ENCODE measurements at regions of chr1 and their contacts with region 1.

Region 1: DNA sequence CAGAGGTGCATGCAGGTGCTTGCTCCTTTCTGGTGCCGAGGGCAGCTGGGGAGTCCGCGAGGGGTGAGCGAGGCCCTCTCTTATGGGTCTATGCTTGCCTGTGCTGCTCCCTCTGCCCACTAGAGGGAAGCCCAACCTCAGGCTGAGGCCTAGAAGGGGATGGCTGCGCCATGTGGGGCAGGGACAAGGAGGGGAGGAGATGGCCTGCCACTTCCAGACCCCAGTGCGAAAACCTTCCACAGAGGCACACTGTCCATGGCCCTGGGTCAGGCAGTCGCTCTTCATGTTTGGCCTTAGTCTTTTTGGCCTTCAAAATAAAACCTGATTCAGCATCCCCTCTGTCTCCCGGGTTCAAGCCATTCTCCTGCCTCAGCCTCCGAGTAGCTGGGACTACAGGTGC is 14.0 kb downstream of the RHBG start:
- DNase-seq: no peak
- ATAC-seq: peak; percentile 98
- H3K4me3 ChIP-seq: no peak overlapping the region
- H3K27ac ChIP-seq: no peak overlapping the region
- H3K4me1 ChIP-seq: no peaks in the 10 kb centered on the region
- H3K27me3 ChIP-seq: peaks cover 2 to 5% of the 10 kb centered on the region in 2 experiments
- CTCF ChIP-seq: peak; percentile 92 to 98 (median 93)
- EP300 ChIP-seq: no peak
- POLR2A ChIP-seq: no peak
- RAD21 ChIP-seq: peak; percentile 91

Region 2: DNA sequence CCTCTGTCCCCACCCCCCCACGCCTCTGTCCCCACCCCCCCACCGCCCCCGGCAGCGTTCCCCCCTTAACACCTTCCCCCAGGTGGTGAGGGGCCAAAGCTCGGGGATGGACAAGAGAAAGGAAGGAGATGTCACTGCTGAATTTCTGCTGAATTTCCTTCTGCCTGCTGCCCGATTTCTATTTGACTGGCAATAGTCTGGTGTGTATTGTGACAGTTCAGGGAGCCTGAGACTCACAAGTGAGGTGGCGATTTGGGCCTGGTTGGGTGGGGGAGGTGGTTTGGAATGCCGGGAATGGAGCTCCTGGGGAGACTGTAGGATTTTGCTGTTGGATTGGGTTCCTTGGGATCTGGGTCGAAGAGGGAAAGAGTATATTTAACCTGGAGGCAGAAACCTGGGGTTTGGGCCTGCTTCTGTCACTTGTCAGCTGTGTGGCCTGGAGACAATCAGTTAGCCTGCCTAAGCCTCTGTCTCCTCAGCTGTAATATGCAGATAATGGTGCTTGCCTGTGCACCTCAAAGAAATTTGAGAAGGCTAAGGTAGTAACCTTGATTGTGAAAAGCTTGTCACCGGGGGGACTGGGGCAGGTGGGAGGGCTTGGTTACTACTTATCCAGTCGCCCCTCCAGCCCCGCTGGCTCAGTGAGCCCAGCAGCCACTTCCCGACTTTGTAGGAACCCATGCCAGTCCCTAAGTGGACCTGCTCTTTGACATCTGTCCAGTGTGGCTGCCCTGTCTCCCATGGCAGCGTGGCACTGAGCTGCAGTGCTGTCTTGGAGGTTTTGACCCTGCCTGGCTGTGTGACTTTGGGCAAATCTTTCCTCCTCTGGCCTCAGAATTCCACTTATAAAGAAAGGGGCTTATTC is 276.2 kb before region 1 on chr1:
- CTCF ChIA-PET with region 1: no interaction called
- POLR2A ChIA-PET with region 1: no interaction called
- RAD21 ChIA-PET with region 1: no interaction called
- SMC1A ChIA-PET with region 1: no interaction called
- in situ Hi-C with region 1: no loop called
- intact Hi-C with region 1: no loop called
- DNase-seq: no peak
- ATAC-seq: peak; percentile 38
- H3K4me3 ChIP-seq: peak overlapping the region; percentile 45; the same call in 1 of the 2 replicates
- H3K27ac ChIP-seq: peak overlapping the region; percentile 57
- H3K4me1 ChIP-seq: peaks cover 30% of the 10 kb centered on the region
- H3K27me3 ChIP-seq: no peaks in the 10 kb centered on the region
- CTCF ChIP-seq: no peak
- EP300 ChIP-seq: no peak
- POLR2A ChIP-seq: no peak
- RAD21 ChIP-seq: no peak

Region 3: DNA sequence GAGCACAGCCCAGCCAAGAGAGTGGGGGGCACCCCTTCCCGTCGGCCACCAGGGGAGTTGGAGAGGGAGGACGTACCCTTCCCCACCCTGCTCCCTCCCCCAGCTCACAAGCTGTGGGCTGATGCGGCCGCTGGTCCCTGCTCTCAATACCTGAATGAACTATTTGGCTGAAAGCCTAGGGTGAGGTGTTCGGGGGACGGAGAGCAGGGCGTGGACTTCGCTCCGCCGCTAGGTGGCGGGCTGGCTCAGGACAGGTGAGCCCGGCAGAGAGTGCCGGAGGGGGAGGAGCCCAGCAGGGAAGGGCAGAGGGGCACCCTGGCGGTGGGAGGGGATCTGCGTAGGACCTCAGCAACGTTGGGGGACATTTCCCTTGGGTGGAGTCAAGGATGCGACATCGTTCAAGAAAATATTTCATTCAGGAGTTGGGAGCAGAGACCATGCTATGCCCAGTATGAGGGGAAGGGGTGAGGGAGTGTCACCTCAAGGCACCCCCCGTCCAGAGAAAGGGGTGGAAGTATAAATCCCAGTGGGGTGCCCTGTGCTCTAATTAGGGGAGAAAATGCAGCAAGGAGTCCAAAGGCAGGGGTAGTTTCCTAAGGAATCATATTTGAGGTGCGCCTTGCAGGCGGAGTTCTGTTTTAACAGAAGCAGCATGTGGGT is 26.0 kb before region 1 on chr1:
- CTCF ChIA-PET with region 1: interaction called, 22 read pairs
- POLR2A ChIA-PET with region 1: no interaction called
- RAD21 ChIA-PET with region 1: interaction called, 4 read pairs
- SMC1A ChIA-PET with region 1: interaction called, 6 read pairs
- in situ Hi-C with region 1: no loop called
- intact Hi-C with region 1: no loop called
- DNase-seq: no peak
- ATAC-seq: peak; percentile 100
- H3K4me3 ChIP-seq: no peak overlapping the region
- H3K27ac ChIP-seq: no peak overlapping the region
- H3K4me1 ChIP-seq: 0 out of 2 replicates have a peak, but pooled peaks cover 2% of the 10 kb centered on the region
- H3K27me3 ChIP-seq: peaks cover 2% of the 10 kb centered on the region in 2 experiments; a peak in 2 of 4 replicates
- CTCF ChIP-seq: peak; percentile 89 to 98 (median 95); a peak in 5 of 6 replicates
- EP300 ChIP-seq: no peak
- POLR2A ChIP-seq: no peak
- RAD21 ChIP-seq: peak; percentile 53; the same call in 1 of the 2 replicates

Region 4: DNA sequence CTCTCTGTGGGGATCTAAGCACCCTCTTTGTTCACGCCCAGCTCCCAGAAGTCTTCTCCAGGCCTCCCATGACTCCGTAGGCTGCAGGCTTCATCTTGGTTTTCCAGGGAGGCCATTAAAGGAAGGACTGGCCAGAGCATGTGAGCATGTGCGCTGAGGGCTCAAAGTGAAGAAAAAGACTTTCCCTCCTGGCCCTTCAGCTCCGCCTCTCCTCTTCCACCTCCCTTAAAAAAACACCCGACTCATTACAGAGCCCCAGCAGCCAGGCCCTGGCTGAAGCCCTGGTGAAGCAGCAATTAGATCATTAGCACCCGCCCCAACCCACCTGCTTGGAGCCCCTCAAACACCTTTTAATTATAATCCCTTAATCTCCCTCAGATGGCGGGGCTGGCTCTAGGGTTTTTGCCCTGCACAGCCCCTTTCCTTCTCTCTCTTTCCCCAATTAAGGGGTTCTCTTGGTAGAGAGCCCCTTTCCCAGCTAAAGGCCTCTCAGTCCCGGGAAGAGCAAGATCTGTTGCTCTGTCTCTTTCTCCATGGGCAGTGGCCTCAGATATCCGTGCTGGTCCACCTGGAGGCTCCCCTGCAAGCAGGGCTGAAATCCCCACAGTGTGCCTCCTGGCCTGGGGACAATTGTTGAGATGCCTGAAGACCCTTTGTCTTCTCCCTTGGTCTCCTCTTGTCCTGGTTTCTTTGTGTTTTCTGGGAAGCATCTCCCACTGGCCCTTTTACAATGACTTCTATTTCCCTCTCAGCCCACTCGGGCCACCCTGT is 16.5 kb after region 1 on chr1:
- CTCF ChIA-PET with region 1: interaction called, 12 read pairs
- POLR2A ChIA-PET with region 1: interaction called, 3 read pairs
- RAD21 ChIA-PET with region 1: no interaction called
- SMC1A ChIA-PET with region 1: interaction called, 5 read pairs
- in situ Hi-C with region 1: no loop called
- intact Hi-C with region 1: no loop called
- DNase-seq: no peak
- ATAC-seq: no peak
- H3K4me3 ChIP-seq: no peak overlapping the region
- H3K27ac ChIP-seq: no peak overlapping the region
- H3K4me1 ChIP-seq: no peaks in the 10 kb centered on the region; the same call in 1 of the 2 replicates
- H3K27me3 ChIP-seq: no peaks in the 10 kb centered on the region; a peak in 1 of 4 replicates
- CTCF ChIP-seq: no peak
- EP300 ChIP-seq: no peak
- POLR2A ChIP-seq: no peak
- RAD21 ChIP-seq: no peak

Region 5: GRCh38 chr1:156414461-156415064 is 31.5 kb after region 1 on chr1:
- CTCF ChIA-PET with region 1: interaction called, 26 read pairs
- POLR2A ChIA-PET with region 1: no interaction called
- RAD21 ChIA-PET with region 1: interaction called, 21 read pairs
- SMC1A ChIA-PET with region 1: interaction called, 23 read pairs
- in situ Hi-C with region 1: no loop called
- intact Hi-C with region 1: no loop called
- DNase-seq: no peak
- ATAC-seq: no peak
- H3K4me3 ChIP-seq: no peak overlapping the region
- H3K27ac ChIP-seq: no peak overlapping the region
- H3K4me1 ChIP-seq: no peaks in the 10 kb centered on the region
- H3K27me3 ChIP-seq: no peaks in the 10 kb centered on the region; a peak in 1 of 4 replicates
- CTCF ChIP-seq: no peak
- EP300 ChIP-seq: no peak
- POLR2A ChIP-seq: no peak
- RAD21 ChIP-seq: no peak

Region 6: GRCh38 chr1:156429313-156430060 is 46.5 kb after region 1 on chr1:
- CTCF ChIA-PET with region 1: interaction called, 18 read pairs
- POLR2A ChIA-PET with region 1: interaction called, 3 read pairs
- RAD21 ChIA-PET with region 1: interaction called, 4 read pairs
- SMC1A ChIA-PET with region 1: interaction called, 11 read pairs
- in situ Hi-C with region 1: no loop called
- intact Hi-C with region 1: no loop called
- DNase-seq: no peak
- ATAC-seq: no peak
- H3K4me3 ChIP-seq: no peak overlapping the region
- H3K27ac ChIP-seq: no peak overlapping the region
- H3K4me1 ChIP-seq: no peaks in the 10 kb centered on the region; the same call in 1 of the 2 replicates
- H3K27me3 ChIP-seq: peaks cover 16 to 26% of the 10 kb centered on the region in 2 experiments
- CTCF ChIP-seq: no peak
- EP300 ChIP-seq: no peak
- POLR2A ChIP-seq: no peak
- RAD21 ChIP-seq: no peak

Region 7: DNA sequence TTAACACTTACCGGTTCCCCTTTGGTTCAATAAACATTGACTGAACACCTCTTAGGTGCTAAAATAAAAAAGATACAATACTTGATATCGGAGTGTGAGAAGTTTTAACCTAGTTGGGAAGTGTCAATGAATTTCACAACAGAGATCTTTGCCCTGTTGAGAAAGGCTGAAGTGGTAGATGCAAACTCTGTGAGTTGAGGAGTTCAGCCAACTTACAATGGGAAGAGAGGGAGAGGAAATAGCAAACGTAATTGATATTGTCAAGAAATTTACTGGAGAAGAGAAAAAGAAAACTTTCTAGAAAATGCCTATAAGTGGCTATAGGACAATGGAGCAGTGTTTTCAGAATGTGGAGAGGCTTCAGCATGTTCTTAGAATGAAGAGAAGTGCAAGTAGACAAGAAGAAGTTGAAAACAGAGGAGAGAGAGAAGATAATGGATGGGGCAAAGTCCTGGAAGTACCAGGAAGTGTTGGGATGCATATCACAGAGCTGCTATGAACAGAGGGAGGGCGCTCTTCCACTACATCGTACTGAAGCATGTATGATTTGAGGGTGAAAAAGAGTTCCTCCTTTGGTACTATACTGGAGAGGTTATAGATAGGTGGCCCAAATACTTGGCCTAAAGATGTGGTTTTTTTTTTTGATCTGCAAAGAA is 68.6 kb after region 1 on chr1:
- CTCF ChIA-PET with region 1: interaction called, 468 read pairs
- POLR2A ChIA-PET with region 1: interaction called, 8 read pairs
- RAD21 ChIA-PET with region 1: interaction called, 162 read pairs
- SMC1A ChIA-PET with region 1: interaction called, 149 read pairs
- in situ Hi-C with region 1: no loop called
- intact Hi-C with region 1: loop called (anchors 1 kb)
- DNase-seq: no peak
- ATAC-seq: no peak
- H3K4me3 ChIP-seq: no peak overlapping the region
- H3K27ac ChIP-seq: no peak overlapping the region
- H3K4me1 ChIP-seq: peaks cover 6% of the 10 kb centered on the region
- H3K27me3 ChIP-seq: peaks cover 0 to 3% of the 10 kb centered on the region in 2 experiments; a peak in 2 of 4 replicates
- CTCF ChIP-seq: no peak; a peak in 1 of 6 replicates
- EP300 ChIP-seq: no peak
- POLR2A ChIP-seq: no peak
- RAD21 ChIP-seq: no peak

Region 8: DNA sequence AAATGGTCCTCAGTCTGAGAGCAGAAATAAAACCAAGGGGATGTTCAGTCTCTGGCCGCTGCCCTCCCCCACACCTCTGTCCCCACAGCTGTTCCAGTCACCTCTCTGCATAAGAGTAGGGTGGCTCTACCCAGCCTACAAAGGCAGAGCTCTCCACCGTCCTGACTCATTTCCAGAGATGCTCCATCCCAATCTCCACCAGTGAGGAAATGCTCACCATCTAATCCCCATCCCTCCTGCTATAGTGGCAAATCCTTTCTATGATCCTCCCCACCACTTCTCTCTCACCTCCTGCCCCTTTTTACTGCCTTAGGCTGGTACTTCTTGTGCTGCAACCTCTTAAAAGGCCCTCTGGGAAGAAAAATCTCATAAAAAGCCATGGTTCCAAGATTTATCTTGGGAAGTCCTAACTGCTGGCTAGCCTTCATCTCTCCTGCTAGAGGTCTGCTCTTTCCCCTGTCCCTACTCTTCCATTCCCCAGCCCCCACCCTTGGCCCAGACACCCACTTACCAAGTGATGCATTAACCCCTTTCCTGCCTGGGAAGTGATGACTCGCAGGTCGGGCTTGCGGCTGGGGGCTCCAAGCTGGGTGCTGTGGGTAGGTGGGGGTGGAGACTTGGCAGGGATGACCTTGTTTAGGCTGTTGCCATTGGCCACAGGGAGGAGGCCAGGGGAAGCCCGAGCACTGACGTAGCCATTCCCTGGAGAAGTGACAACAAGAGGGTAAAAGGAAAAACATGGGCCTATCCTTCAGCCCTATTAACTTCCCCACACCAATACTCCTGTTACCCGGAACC is 93.7 kb after region 1 on chr1:
- CTCF ChIA-PET with region 1: no interaction called
- POLR2A ChIA-PET with region 1: no interaction called
- RAD21 ChIA-PET with region 1: no interaction called
- SMC1A ChIA-PET with region 1: no interaction called
- in situ Hi-C with region 1: no loop called
- intact Hi-C with region 1: no loop called
- DNase-seq: no peak
- ATAC-seq: no peak
- H3K4me3 ChIP-seq: no peak overlapping the region
- H3K27ac ChIP-seq: no peak overlapping the region
- H3K4me1 ChIP-seq: peaks cover 14% of the 10 kb centered on the region
- H3K27me3 ChIP-seq: no peaks in the 10 kb centered on the region
- CTCF ChIP-seq: no peak
- EP300 ChIP-seq: no peak
- POLR2A ChIP-seq: 0 out of 2 replicates have a peak, but pooled peaks have one; percentile 22
- RAD21 ChIP-seq: no peak